ENCODE measurements at regions of chr21 and their contacts with region 1.

Region 1: DNA sequence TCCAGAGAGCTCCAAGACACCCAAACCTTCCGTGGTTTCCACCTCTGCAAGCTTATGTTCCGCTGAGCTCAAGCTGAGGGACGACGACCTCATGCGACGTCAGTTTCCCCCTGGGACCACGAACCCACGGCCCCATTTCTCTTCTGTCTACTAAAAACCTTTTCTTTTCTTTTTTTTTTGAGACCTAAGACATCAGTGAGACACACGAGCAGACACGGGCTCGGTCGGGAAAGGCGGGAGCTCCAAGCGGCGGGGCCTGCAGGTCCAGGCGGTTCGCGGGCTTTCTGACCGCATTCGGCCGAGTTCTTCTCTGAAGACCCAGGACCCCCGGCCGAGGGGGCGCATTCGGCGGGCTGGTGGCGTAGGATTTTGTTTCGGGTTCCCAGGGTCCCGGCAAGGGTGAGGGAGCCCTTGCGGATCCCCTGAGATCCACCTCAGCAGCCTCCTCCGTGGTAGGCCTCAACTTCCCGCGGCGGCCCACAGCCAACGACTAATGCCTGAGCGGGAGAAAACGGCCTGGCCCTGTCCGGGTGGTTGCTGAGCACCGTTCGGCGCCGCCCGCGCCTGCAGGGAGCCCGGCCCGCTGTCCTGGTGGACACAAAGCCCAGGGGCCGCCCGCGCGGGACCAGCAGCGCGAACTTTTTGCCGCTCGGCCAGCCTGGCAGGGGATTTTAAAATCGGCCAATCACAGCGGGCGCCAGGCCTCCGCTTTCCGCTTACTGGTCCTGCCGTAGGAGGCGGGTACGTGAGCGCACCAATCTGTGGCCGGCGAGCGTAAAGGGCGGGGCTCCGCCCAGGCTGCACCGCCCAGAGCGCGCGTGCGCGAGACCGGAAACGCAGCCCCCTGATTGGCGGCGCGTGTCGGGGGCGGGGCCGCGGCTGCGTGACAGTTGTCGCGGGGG is at the start of gene C21orf58:
- DNase-seq: peak; percentile 99
- ATAC-seq: peak; percentile 96
- total RNA-seq, gene C21orf58: 1.2 TPM

Region 2: GRCh38 chr21:45800339-45801080 is 523.0 kb before region 1 on chr21:
- intact Hi-C with region 1: no loop called
- DNase-seq: no peak
- ATAC-seq: no peak

Region 3: GRCh38 chr21:46184625-46185555 is 138.6 kb before region 1 on chr21:
- intact Hi-C with region 1: loop called (anchors 5 kb)
- DNase-seq: peak; percentile 95
- ATAC-seq: peak; percentile 57

Region 4: DNA sequence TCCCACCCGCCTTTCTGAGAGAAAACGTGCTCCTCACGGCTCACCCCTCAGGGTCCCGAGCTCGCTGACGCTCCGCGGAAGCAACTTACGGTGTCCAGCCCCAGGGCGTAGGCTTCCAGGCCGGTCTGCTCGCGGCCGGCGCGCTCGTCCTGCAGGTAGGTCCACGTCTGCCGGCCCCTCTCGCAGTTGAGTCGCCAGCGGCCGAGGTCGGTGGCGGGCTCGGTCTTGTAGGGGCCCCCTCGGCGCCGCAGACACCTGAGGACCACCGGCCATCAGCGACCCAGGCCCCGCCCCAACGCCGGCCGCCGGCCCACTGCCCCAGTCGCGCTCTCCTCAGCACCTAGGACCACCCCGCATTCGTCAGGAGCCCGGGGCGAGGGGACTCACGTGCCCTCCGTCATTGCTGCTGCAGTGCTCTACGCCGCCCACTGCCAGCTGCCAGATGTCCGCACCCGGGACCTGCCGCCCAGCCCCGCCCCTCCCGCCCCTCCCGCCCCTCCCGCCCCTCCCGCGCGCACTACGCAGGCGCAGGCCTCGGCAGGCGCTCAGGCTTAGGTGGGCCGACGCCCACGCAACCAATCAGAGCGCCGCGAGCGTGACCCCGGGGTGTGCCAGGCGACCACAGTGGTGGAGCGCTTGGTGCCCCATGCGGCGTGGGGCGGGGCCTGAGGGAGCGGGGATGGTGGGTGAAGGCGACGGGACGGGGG is 95.0 kb before region 1 on chr21 and contains the start of gene LSS:
- intact Hi-C with region 1: loop called (anchors 5 kb)
- DNase-seq: peak; percentile 99
- ATAC-seq: peak; percentile 95
- total RNA-seq, gene LSS: 61.0 TPM

Region 5: DNA sequence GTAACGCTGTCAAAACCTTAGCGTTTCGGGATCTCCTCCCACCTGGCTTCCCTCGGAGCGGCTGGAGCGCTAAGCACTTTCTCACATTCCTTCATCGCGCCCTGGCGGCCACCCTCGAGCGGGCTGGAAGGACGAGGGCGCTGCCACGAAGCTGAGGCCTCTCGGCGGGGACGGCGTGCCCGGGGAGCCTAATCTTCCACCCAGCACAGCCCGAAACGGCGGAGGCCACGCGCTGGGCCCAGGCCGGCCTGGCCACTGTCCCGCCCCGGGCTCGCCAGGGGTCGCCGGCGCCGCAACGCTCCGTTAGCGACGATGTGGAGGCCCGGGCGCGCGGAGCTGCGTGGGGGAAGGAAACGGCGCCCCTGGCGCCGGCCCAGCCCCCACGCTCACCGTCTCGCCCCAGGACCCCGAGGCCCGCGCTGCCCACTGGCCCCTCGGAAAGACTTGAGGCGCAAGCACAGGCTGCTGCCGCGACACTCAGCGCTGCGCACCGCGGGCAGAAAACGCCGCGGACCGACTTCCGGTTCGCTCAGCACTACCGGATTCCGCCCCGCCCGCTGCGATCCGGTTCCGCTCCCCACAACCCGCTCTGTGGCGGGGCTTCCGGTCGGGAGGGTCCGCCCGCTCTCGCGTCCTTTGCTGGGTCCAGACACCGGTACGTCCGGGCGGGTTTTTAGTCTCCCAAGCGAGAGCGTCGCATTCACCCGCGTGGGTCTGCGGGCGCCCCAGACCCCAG is 37.5 kb before region 1 on chr21 and contains the start of gene YBEY:
- intact Hi-C with region 1: loop called (anchors 5 kb)
- DNase-seq: peak; percentile 93
- ATAC-seq: peak; percentile 97
- total RNA-seq, gene YBEY: 18.6 TPM

Region 6: DNA sequence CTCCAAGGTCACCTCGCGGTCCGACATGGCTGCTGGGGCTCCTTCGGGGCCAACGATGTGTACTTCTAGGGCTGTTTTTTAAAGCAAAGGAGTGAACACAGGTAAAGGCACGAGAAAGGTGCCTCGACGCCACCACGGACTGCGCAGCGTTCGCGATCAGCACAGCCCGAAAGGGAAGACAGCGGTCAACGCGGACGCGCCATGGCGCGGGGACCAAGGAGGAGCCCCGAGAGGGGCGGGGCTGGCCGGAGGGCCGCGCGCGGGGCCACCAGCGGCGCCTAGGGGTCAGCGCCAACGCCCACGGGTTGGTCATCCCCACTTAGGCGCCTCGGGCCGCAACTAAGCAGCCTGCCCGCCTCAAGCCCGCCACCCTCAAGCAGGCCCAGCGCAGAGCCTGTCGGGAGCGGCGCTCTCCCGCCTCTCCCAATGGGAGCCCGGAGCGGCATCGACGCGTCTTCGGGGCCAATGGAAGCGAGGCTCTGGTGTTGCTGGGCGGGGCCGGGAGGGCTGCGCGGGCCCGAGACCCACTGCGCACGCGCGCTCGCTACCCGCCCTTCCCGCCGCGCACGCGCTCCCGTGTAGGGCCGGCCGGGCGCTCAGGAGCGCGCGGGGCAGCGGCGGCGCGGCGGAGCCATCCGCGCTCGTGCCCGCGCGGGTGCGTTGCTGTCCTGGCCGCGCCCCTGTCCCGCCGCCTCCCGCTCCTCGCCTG is 135.0 kb after region 1 on chr21 and contains the start of gene DIP2A:
- intact Hi-C with region 1: loop called (anchors 10 kb)
- DNase-seq: peak; percentile 98
- ATAC-seq: peak; percentile 98
- total RNA-seq, gene DIP2A: 23.9 TPM

Measured in Right ventricle myocardium inferior (tissue), 1 donor.